Lower leg skin (tissue), 4 donors: ENCODE measurements at regions of chr1 and their contacts with region 1.

Region 1: DNA sequence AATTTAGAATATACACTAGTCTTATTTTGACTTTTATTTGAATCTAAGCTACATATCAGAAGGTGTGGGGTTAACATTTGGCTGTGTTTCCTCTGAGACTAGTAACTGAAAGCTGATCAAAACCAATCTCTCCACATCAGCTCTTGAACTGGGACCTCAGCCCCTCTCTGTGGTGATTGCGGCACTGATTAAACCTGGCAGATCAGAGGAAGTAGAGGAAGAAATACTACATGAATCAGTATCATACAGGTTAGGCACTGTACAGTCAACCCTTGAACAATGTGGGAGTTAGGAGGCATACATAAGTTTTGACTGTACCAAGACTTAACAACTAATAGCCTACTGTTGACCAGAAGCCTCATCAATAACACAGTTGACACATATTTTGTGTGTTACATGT is 122.5 kb upstream of the C1orf87 start:
- DNase-seq: no peak
- H3K4me3 ChIP-seq: no peak overlapping the region
- CTCF ChIP-seq: no peak
- POLR2A ChIP-seq: no peak

Region 2: GRCh38 chr1:60017508-60018205 is 178.4 kb before region 1 on chr1:
- intact Hi-C with region 1: no loop called
- DNase-seq: no peak
- H3K4me3 ChIP-seq: no peak overlapping the region
- CTCF ChIP-seq: no peak
- POLR2A ChIP-seq: no peak

Region 3: GRCh38 chr1:62144238-62144831 is 1948.3 kb after region 1 on chr1:
- intact Hi-C with region 1: loop called (anchors 5 kb)
- DNase-seq: peak; percentile 25 to 32
- H3K4me3 ChIP-seq: no peak overlapping the region
- CTCF ChIP-seq: no peak
- POLR2A ChIP-seq: no peak